Natural killer cell (primary cell): ENCODE measurements at regions of chr9 and their contacts with region 1.

Region 1: DNA sequence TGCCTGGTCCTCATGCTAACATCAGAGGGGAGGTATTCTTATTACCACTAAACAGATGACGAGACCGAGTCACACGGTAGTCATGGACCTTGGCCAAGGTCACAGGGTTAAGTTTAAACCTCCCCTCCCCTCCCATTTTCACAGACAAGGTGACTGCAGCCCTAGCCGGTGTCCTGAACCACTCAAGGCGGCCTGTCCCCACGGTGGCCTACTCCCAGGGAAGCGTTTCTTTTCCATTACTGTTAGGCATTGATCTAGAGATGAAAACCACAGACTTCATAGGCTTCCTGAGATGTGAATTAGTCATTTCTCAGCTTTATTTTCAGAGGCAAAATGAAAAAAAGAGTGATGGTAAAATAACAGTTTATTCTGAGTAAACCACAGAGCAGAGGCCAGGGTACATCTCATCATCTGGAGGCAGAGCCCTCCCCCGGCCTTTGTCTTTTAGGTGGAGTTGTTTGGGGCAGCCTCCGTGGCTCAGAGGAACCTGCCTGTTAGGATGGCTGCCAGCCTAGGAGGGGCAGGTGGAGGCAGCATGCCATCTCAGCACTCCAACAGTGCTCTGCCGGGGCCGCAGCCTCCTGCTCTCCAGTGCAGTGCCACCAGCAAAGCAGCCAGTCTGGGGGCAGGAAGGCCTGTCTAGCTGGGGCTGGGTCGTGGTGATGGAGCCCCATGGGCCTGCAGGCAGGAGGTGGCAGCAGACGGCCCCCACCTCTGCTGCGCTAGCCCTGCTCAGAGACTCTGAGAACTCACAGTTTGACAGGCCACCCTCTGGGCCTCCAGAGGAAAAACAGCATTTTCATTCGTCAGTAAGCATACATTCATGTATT is 71.2 kb downstream of the RAPGEF1 start:
- DNase-seq: peak; percentile 72 to 85
- ATAC-seq: peak; percentile 67 to 77 (median 72)
- H3K4me3 ChIP-seq: no peak overlapping the region
- H3K4me3 Mint-ChIP-seq: peak overlapping the region; percentile 66
- H3K27ac ChIP-seq: peak overlapping the region; percentile 92
- H3K27ac Mint-ChIP-seq: peak overlapping the region; percentile 98 to 99
- H3K4me1 ChIP-seq: peaks cover 84% of the 10 kb centered on the region
- H3K4me1 Mint-ChIP-seq: peaks cover 89 to 90% of the 10 kb centered on the region in 2 donors
- H3K27me3 ChIP-seq: no peaks in the 10 kb centered on the region
- H3K27me3 Mint-ChIP-seq: no peaks in the 10 kb centered on the region
- CTCF ChIP-seq: no peak

Region 2: GRCh38 chr9:131417264-131418142 is 251.2 kb before region 1 on chr9:
- intact Hi-C with region 1: no loop called
- DNase-seq: no peak
- ATAC-seq: peak in 1 of 3 donors; percentile 13
- H3K4me3 ChIP-seq: no peak overlapping the region
- H3K4me3 Mint-ChIP-seq: peak overlapping the region; percentile 2
- H3K27ac ChIP-seq: no peak overlapping the region
- H3K27ac Mint-ChIP-seq: peak overlapping the region; percentile 79 to 88
- H3K4me1 ChIP-seq: peaks cover 55% of the 10 kb centered on the region
- H3K4me1 Mint-ChIP-seq: peaks cover 77 to 79% of the 10 kb centered on the region in 2 donors
- H3K27me3 ChIP-seq: no peaks in the 10 kb centered on the region
- H3K27me3 Mint-ChIP-seq: no peaks in the 10 kb centered on the region
- CTCF ChIP-seq: no peak

Region 3: DNA sequence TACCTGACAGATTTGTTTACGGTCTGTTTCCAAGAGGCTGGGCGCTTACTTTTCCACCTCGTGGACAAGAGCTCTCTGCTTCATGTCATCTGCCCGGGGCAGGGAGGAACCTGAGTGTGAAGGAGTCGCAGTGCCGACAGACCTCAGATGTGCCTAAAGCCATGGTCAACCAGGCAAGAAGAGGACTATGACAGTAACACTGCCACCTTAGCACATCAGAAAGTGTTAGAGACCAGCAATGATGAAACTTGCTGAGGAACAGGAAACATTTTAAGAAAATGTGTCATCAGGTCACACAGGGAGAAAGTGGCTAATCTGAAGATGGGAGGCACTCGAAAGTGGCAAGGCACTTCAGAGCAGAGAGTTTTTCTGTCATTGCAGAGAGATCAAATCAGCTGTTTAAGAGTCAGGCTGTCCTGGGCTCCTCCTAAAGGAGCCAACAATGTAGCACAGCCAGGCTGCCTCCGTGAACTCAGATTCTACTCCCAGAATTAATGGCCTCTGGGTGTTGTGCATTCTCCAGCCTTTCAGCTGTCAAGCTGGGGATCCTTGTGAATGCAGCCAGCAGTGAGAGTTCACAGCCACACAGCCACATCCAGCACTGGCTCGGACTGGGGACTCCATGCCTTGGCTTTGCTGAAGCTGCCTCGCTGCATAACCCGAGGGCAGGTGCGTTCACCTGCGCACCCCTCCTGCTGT is 23.4 kb before region 1 on chr9:
- intact Hi-C with region 1: loop called (anchors 1 kb)
- DNase-seq: peak; percentile 42 to 47
- ATAC-seq: peak; percentile 83 to 87 (median 86)
- H3K4me3 ChIP-seq: no peak overlapping the region
- H3K4me3 Mint-ChIP-seq: peak overlapping the region; percentile 61
- H3K27ac ChIP-seq: peak overlapping the region; percentile 30
- H3K27ac Mint-ChIP-seq: peak overlapping the region; percentile 82 to 91
- H3K4me1 ChIP-seq: peaks cover 31% of the 10 kb centered on the region
- H3K4me1 Mint-ChIP-seq: peaks cover 44 to 52% of the 10 kb centered on the region in 2 donors
- H3K27me3 ChIP-seq: no peaks in the 10 kb centered on the region
- H3K27me3 Mint-ChIP-seq: no peaks in the 10 kb centered on the region
- CTCF ChIP-seq: no peak

Region 4: GRCh38 chr9:131722009-131722629 is 53.5 kb after region 1 on chr9:
- intact Hi-C with region 1: no loop called
- DNase-seq: no peak
- ATAC-seq: no peak
- H3K4me3 ChIP-seq: no peak overlapping the region
- H3K4me3 Mint-ChIP-seq: no peak overlapping the region
- H3K27ac ChIP-seq: peak overlapping the region; percentile 10
- H3K27ac Mint-ChIP-seq: peak overlapping the region; percentile 62 to 87
- H3K4me1 ChIP-seq: peaks cover 59% of the 10 kb centered on the region
- H3K4me1 Mint-ChIP-seq: peaks cover 77 to 86% of the 10 kb centered on the region in 2 donors
- H3K27me3 ChIP-seq: no peaks in the 10 kb centered on the region
- H3K27me3 Mint-ChIP-seq: no peaks in the 10 kb centered on the region
- CTCF ChIP-seq: no peak

Region 5: DNA sequence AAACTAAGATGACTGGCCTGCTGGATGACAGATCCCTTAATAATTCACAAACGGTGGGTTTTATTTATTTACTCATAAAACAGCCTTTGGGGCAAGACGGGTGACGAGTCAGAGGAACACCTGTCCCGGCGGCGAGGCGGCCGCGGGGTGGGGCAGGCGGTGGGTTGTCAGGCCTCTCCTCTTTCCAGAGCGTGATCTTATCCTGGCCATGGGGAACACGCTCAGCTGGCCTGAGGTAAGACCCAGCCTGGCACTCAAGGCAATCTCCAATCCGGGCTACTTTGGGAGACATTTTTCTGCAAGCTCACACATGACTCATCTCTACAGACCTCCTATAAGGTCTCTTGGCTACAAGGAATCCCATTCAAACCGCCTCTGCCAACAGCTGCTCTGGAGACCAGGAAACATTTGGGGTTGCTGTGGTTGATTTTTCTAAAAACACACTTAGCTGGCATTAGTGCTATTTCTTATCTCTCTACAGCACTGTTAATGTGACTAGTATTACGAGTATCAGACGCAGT is 64.9 kb after region 1 on chr9:
- intact Hi-C with region 1: loop called (anchors 1 kb)
- DNase-seq: peak; percentile 52 to 75
- ATAC-seq: peak in 2 of 3 donors; percentile 6 to 21
- H3K4me3 ChIP-seq: peak overlapping the region; percentile 4
- H3K4me3 Mint-ChIP-seq: peak overlapping the region; percentile 82
- H3K27ac ChIP-seq: peak overlapping the region; percentile 93
- H3K27ac Mint-ChIP-seq: peak overlapping the region; percentile 92 to 95
- H3K4me1 ChIP-seq: peaks cover 99% of the 10 kb centered on the region
- H3K4me1 Mint-ChIP-seq: peaks cover 84 to 87% of the 10 kb centered on the region in 2 donors
- H3K27me3 ChIP-seq: no peaks in the 10 kb centered on the region
- H3K27me3 Mint-ChIP-seq: no peaks in the 10 kb centered on the region
- CTCF ChIP-seq: no peak

Region 6: DNA sequence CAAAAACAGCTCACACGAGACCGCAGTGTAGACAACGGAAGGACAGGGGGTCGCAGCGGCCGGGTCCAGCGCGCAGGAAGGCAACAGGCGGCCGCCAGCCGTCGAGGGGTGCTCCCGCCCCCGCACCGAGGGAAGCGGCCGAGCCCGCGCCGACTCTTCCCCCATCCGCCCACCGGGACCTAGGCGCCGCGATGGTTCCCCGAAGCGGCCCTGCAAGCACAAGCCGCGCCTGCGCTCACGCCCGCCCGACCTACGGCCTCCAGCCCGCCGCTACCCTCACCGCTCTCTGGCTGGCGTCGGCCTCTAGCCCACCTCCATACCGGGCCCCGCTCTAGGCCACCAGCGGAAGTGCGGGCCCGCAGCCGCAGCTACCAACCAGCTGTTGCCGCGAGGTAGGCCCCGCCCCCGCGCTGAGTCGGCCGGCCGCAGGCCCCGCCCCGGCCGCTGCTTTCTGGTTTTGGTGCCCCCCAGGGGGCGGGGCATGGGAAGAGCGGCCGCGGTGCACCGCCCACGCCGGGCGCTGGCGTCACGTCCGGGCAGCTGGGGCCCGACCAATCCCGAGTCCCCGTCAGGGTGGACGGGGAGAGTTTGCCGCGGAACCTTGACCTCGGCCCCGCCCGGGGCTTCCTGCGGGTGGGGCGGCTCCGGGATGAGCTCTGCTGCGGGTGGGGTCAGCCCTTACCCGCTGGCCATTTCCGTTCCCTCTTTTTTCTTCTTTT is 686.1 kb after region 1 on chr9 and contains the start of gene SETX:
- intact Hi-C with region 1: loop called (anchors 10 kb)
- DNase-seq: peak; percentile 92 to 97
- ATAC-seq: peak; percentile 81 to 92 (median 85)
- H3K4me3 ChIP-seq: peak within 1 kb of the TSS; percentile 95
- H3K4me3 Mint-ChIP-seq: peak within 1 kb of the TSS; percentile 96
- H3K27ac ChIP-seq: peak within 1 kb of the TSS; percentile 97
- H3K27ac Mint-ChIP-seq: peak within 1 kb of the TSS; percentile 77 to 96
- H3K4me1 ChIP-seq: peaks cover 45% of the 10 kb centered on the region
- H3K4me1 Mint-ChIP-seq: peaks cover 36 to 45% of the 10 kb centered on the region in 2 donors
- H3K27me3 ChIP-seq: no peaks in the 10 kb centered on the region
- H3K27me3 Mint-ChIP-seq: no peaks in the 10 kb centered on the region
- CTCF ChIP-seq: no peak
- total RNA-seq, gene SETX: 85.3 to 109 (median 97.7) TPM